HepG2 (cell line): ENCODE measurements at regions of chr9 and their contacts with region 1.

Region 1: DNA sequence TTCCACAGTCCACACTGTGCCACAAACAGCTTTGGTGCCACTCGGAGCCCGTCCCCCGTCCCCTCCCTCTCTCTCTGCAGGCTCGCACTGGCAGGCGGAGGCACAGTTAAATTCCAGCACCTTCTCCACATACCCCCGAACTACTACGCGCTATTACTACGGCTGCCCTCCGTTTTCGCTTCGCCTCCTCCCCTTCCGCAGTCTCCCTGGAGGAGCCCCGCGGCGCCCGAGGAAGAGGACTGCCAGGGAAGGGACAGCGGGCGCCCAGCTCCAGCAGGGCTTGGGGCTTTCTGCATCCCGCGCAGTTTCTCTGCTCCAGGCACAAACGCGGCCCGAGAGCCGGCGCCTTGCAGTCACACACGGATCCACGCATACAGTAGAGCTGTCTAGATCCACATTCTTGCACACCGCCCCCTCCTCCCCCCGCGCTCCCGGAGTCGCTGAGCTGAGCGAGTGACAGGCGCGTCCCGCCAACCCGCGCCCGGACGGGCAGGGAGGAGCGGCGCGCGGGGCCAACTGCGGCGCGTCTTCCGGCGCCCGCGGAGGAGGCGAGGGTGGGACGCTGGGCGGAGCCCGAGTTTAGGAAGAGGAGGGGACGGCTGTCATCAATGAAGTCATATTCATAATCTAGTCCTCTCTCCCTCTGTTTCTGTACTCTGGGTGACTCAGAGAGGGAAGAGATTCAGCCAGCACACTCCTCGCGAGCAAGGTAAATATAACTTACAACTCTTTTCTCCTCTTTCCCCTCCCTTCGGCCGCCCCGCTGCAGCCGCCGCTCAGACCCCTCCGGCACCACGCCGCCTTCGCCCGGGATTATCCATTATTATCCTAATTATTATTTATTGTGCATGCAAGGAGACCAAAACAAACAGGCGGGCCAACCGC is at the start of gene SMARCA2:
- DNase-seq: peak; percentile 87
- ATAC-seq: peak; percentile 86
- H3K4me3 ChIP-seq: peak within 1 kb of the TSS; percentile 76 to 84 (median 84)
- H3K27ac ChIP-seq: peak within 1 kb of the TSS; percentile 67
- H3K4me1 ChIP-seq: peaks cover 19% of the 10 kb centered on the region
- H3K27me3 ChIP-seq: peaks cover 0 to 30% of the 10 kb centered on the region in 2 experiments; a peak in 4 of 5 replicates
- CTCF ChIP-seq: no peak
- EP300 ChIP-seq: no peak
- POLR2A ChIP-seq: peak; percentile 40 to 75; a peak in 3 of 4 replicates
- RAD21 ChIP-seq: no peak
- total RNA-seq, gene SMARCA2: 23.7 and 35.5 TPM in 2 replicates

Region 2: GRCh38 chr9:489198-490197 is 1525.4 kb before region 1 on chr9:
- CTCF ChIA-PET with region 1: no interaction called
- POLR2A ChIA-PET with region 1: no interaction called
- in situ Hi-C with region 1: no loop called
- intact Hi-C with region 1: no loop called
- DNase-seq: peak; percentile 80
- ATAC-seq: peak; percentile 91
- H3K4me3 ChIP-seq: no peak overlapping the region; a peak in 1 of 6 replicates
- H3K27ac ChIP-seq: no peak overlapping the region
- H3K4me1 ChIP-seq: peaks cover 32% of the 10 kb centered on the region
- H3K27me3 ChIP-seq: peaks cover 0 to 8% of the 10 kb centered on the region in 2 experiments; a peak in 1 of 5 replicates
- CTCF ChIP-seq: no peak
- EP300 ChIP-seq: peak in 1 of 2 experiments; percentile 29; a peak in 2 of 4 replicates
- POLR2A ChIP-seq: no peak
- RAD21 ChIP-seq: no peak

Region 3: GRCh38 chr9:1414701-1415100 is 600.2 kb before region 1 on chr9:
- CTCF ChIA-PET with region 1: no interaction called
- POLR2A ChIA-PET with region 1: no interaction called
- in situ Hi-C with region 1: no loop called
- intact Hi-C with region 1: no loop called
- DNase-seq: no peak
- ATAC-seq: no peak
- H3K4me3 ChIP-seq: no peak overlapping the region
- H3K27ac ChIP-seq: no peak overlapping the region
- H3K4me1 ChIP-seq: no peaks in the 10 kb centered on the region
- H3K27me3 ChIP-seq: no peaks in the 10 kb centered on the region
- CTCF ChIP-seq: no peak
- EP300 ChIP-seq: no peak
- POLR2A ChIP-seq: no peak
- RAD21 ChIP-seq: no peak

Region 4: GRCh38 chr9:2066312-2067273 is 51.7 kb after region 1 on chr9:
- CTCF ChIA-PET with region 1: no interaction called
- POLR2A ChIA-PET with region 1: no interaction called
- in situ Hi-C with region 1: no loop called
- intact Hi-C with region 1: loop called (anchors 5 kb)
- DNase-seq: peak; percentile 52
- ATAC-seq: peak; percentile 54; the same call in 2 of the 3 replicates
- H3K4me3 ChIP-seq: no peak overlapping the region
- H3K27ac ChIP-seq: no peak overlapping the region
- H3K4me1 ChIP-seq: no peaks in the 10 kb centered on the region
- H3K27me3 ChIP-seq: no peaks in the 10 kb centered on the region
- CTCF ChIP-seq: peak; percentile 38
- EP300 ChIP-seq: no peak
- POLR2A ChIP-seq: no peak
- RAD21 ChIP-seq: no peak